Activated CD4-positive, alpha-beta T cell treated with anti-CD3 and anti-CD28 coated beads, Interleukin-2, amount 10 ng/mL, durations not matched to agents 24 days and 14 days (primary cell): ENCODE measurements at regions of chr19 and their contacts with region 1.

Region 1: DNA sequence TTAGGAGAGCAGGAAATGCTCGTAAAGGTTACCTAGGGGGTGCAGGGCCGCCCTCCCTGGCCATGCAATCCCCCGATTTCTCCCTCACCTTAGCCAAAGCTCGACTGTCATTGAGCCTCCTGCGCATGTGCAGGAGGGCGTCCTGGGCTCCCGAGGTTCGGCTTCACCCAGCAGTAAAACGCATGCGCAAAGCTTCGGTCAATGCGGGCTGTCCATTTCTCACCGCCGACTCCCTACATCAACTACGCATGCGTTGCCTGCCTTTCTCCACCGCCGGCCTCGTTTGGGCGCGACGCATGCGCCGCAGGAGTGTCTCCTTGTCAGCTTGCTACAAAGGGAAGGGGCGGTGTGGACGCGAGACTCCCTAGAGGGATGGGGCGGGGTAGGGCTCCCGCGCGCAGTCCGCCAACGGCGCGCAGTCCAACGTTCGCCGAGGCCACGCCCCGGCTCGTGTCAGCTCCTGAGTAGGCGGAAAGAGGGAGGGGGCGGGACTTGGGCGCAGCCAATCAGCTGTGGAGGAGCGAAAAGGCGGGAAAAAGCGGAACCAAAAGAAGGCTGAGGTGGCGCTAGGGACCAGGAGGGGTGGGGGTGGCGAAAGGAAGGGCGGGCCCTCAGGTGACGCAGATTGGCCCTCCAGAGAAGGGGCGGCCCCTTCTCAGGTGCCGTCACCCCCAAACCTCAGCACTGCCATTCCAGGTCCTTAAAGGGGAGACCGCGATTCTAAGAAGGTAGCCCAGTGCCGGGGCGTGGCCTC is at the starts of genes SYNGR4 and TMEM143:
- DNase-seq: peak; percentile 99
- H3K4me3 Mint-ChIP-seq: peak within 1 kb of the TSS; percentile 87
- H3K27ac Mint-ChIP-seq: peak within 1 kb of the TSS; percentile 97
- H3K4me1 Mint-ChIP-seq: peaks cover 16% of the 10 kb centered on the region
- H3K27me3 Mint-ChIP-seq: peaks cover 4% of the 10 kb centered on the region
- total RNA-seq, gene SYNGR4: 0.33 TPM in 1 of 2 replicates, not detected in the other
- total RNA-seq, gene TMEM143: 13.1 and 13.4 TPM in 2 replicates

Region 2: DNA sequence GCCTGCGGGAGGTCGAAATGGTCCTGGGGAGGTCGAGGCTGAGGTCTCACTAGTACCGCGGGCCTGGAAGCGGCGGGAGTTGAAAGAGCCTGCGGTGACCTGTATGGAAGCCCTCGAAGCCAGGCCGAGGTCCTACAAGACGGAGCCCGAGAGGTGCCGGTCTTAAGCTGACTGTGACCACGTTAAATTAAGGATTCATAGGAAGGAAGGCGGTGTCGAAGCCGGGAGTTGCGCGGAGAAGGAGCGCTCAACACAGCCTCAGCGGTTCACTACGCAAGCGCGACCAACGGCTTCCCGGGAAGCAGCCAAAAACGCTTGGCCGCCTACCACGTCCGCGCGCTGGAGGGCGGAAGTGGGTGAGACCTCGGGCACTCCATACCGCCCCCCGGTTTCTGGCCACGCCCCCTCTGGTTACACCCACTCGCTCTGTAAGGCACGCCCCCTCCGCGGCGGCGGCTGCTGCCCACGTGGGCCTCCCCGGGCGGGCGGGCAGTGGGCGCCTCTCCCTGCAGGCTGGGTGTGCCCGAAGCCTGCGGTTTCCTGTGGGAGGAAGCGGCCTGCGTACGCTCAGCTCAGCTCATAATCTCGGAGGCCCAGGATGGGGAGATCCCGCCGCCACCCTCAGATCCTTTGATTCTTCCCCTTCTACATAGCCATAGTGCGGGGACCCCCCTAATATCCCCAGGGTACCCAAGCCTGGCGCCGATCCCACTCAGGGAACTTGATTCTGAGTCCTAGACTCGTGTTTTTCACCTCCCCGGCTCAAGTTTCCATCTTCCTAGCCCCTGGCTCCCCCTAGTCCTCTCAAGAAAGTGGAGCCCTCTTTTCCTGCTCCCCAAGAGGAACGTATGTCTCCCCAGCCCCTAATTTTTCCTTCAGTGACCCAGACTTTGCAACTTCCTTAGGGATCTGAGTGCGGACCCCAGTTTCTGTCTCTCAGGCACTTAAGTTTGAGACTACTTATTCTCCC is 42.1 kb before region 1 on chr19:
- intact Hi-C with region 1: loop called (anchors 2 kb)
- DNase-seq: peak; percentile 100
- H3K4me3 Mint-ChIP-seq: peak overlapping the region; percentile 95
- H3K27ac Mint-ChIP-seq: peak overlapping the region; percentile 99
- H3K4me1 Mint-ChIP-seq: peaks cover 58% of the 10 kb centered on the region
- H3K27me3 Mint-ChIP-seq: no peaks in the 10 kb centered on the region

Region 3: GRCh38 chr19:48391107-48391986 is 27.4 kb after region 1 on chr19 and contains the start of gene KDELR1:
- intact Hi-C with region 1: loop called (anchors 2 kb)
- DNase-seq: peak; percentile 93
- H3K4me3 Mint-ChIP-seq: peak within 1 kb of the TSS; percentile 96
- H3K27ac Mint-ChIP-seq: peak within 1 kb of the TSS; percentile 97
- H3K4me1 Mint-ChIP-seq: peaks cover 20% of the 10 kb centered on the region
- H3K27me3 Mint-ChIP-seq: peaks cover 34% of the 10 kb centered on the region
- total RNA-seq, gene KDELR1: 75.5 and 77.7 TPM in 2 replicates

Region 4: DNA sequence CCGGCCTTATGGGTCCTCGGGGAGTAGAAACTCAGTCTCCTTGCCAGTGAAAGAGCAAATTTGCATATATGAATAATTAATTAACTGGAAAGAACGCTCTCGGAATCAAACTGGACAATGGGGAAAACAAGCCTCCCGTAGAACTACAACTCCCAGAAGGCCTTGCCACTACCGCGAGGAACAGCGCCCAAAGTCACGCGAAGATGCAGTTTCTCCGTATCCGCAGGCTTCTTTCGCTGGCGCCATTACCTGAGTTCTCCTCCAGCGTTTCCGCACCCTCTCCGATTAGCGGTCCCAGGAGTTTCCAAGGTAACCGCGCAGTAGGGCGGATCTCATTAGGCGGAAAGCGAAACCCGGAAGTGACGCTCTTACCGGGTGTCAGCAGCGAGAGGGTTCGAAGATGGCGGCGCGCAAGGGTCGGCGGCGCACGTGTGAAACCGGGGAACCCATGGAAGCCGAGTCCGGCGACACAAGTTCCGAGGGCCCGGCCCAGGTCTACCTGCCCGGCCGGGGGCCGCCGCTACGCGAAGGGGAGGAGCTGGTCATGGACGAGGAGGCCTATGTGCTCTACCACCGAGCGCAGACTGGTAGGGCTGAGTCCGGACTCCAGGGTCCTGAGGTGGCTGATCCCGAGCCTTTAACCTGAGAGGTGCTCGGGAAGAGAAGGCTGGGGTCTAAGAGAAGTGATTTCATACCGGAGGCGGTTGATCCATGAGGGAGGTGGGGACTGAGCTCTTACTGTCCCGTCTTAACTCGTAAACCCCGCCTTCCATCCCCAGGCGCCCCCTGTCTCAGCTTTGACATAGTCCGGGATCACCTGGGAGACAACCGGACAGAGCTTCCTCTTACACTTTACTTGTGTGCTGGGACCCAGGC is 81.9 kb after region 1 on chr19 and contains the start of gene GRWD1:
- intact Hi-C with region 1: loop called (anchors 1 kb)
- DNase-seq: peak; percentile 98
- H3K4me3 Mint-ChIP-seq: peak within 1 kb of the TSS; percentile 96
- H3K27ac Mint-ChIP-seq: peak within 1 kb of the TSS; percentile 97
- H3K4me1 Mint-ChIP-seq: peaks cover 23% of the 10 kb centered on the region
- H3K27me3 Mint-ChIP-seq: peaks cover 25% of the 10 kb centered on the region
- total RNA-seq, gene GRWD1: 89.1 and 90.6 TPM in 2 replicates

Region 5: DNA sequence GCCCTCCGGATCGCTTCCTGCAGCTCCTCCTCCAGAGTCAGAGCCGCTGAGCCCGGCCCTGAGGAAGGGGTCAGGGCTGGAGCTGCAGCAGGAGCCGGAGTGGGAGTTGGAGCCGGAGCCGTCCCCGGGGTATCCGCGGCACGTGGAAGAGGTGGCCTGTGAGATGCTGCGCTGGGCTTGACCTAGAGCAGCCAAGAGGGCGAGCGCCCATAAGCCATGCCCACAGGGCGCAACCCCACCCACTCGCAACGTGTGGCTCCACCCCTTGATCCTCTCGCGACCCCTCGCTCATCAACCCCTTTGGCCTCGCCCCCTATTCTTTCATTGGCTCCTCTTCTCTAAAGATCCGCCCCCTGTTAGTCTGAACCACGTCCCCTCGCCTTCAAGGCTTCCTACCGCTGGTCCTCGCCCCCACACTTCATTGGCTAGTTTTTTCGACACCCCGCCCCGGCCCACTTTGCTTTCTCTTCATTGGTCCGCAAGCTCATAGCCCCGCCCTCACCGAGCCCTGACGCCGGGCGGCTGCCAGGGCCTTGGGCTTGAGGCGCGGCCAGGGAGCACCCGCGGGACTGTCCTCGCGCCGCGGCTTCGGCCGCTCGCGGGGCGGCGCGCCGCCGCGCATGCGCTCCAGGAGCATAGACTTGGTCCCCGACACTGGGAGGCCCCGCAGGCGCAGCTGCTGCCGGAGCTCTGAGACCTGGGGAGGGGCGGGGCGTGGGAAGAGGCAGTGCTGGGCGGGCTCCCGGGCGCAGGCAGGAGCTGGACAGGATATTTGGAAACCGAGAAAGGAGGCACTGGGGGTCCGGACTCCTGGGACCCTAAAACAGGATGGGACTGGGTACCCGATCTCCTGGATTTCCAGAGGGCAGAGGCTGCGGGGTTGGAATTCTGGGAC is 350.1 kb after region 1 on chr19:
- intact Hi-C with region 1: loop called (anchors 1 kb)
- DNase-seq: peak; percentile 100
- H3K4me3 Mint-ChIP-seq: peak overlapping the region; percentile 88
- H3K27ac Mint-ChIP-seq: peak overlapping the region; percentile 87
- H3K4me1 Mint-ChIP-seq: peaks cover 12% of the 10 kb centered on the region
- H3K27me3 Mint-ChIP-seq: no peaks in the 10 kb centered on the region